Activated CD4-positive, alpha-beta T cell treated with anti-CD3 and anti-CD28 coated beads, Interleukin-2, amount 10 ng/mL, durations not matched to agents 24 days and 14 days (primary cell): ENCODE measurements at regions of chr2 and their contacts with region 1.

Region 1: DNA sequence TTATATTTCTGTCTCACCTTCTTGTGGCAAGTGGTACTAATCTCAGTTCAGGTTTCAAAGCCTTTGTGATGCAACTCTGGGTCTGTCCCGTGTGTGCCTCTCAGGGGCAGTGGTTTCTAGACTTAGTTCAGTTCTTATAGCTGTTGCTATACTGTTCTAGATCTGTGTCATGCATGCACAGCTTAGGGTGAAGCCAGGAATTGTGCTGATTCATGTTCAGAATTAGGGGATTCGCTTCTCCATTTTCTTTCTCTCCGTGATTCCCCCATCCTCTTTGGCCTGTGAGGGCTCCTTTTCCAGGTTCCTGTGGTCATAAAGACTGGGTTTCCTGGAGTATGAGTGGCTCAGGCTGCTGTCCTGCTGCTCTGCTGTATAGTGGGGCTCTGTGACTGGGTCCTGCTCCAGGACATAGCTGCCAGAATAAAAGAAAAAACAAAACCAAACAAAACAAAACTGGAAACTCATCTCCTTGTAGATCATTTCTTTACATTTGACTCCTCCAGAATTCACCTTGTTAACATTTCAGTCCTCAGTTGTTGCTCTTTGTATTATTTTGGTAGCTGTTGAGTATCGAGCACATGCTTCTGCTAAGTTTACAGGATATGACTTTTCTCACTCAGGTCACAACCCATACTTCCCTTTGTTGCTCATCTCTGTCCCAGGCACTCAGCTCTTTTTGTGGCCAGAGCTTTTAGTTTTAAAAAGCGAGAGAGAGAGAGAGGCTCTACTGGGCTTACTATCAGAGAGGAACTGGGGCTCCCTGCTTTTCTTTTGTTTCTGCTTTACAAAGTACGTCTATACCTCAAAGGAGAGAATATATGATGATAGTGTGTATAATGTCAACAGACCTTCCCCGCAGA is 34.2 kb downstream of the CERS6 start:
- DNase-seq: peak; percentile 83
- H3K4me3 Mint-ChIP-seq: peak overlapping the region; percentile 80
- H3K27ac Mint-ChIP-seq: peak overlapping the region; percentile 80
- H3K4me1 Mint-ChIP-seq: peaks cover 40% of the 10 kb centered on the region
- H3K27me3 Mint-ChIP-seq: no peaks in the 10 kb centered on the region

Region 2: DNA sequence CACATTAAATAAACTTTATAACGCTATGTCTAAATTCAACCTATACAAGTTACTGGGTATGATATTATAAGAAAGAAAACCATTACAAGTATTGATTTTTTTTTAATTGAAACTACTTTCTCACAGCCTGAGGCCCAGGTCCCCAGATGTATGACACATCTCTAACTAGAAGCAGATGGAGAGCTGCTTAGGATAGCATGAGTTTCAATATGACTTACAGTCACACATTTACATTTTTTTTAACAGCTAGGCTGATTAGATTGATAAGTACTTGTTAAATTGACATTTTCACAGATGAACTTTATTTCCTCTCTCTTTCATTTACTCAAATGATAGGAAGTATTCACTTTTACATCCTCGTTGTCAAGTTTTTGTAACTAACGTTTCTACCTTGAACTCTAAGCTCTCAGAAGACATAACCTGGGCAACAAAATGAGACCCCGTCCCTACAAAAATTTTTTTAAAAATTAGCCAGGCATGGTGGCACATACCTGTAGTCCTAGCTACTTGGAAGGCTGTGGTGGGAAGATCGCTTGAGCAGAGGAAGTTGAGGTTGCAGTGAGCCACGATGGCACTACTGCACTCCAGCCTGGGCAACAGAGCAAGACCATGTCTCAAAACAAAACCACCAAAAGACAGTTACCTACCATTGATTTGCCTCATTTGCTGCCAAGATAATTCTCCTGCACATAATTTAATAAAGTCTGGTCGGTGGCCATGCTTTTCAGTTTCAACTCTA is 295.3 kb before region 1 on chr2:
- intact Hi-C with region 1: loop called (anchors 1 kb)
- DNase-seq: peak; percentile 75
- H3K4me3 Mint-ChIP-seq: peak overlapping the region; percentile 71
- H3K27ac Mint-ChIP-seq: peak overlapping the region; percentile 92
- H3K4me1 Mint-ChIP-seq: peaks cover 48% of the 10 kb centered on the region
- H3K27me3 Mint-ChIP-seq: no peaks in the 10 kb centered on the region

Region 3: DNA sequence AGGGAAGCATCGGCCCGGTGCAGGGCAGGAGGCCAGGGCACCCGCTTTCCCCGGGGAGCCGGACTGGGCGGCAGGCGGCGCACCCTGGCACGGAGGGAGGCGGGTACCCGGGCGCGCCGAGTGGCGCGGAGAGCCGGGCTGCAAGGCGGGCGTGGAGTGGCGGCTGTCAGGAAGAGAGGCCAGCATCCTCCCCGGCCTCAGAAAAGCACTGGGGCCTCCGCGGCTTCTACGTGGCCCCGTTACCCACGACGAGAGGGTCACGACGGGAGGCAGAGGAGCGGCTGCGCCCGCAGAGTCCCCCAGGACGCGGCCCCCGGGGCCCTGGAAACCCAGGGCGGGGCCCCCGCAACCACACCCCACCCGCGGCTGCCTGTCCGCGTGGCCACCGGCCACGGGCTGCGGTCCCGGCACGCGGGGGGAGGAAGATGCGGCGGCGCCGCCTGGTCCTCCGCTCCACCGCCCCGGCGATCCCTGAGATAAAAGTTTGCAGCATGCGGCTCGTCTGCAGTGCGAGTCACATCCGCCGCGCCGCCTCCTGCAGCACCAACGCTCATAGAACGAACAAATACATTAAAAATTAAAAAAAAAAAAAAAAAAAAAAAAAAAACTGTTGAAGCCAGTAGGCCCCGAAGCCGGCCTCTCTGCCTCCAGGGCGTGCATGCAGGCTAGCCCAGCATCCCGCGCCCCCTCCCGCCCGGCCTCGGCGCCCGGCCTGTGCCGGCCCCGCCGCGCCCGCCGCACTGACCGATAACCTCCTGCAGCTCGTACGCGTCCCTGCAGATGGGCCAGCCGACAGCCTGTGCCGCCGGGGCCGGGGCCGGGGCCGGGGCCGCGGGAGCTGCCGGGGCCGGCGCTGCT is 243.5 kb before region 1 on chr2:
- intact Hi-C with region 1: loop called (anchors 2 kb)
- DNase-seq: peak; percentile 94
- H3K4me3 Mint-ChIP-seq: peak overlapping the region; percentile 88
- H3K27ac Mint-ChIP-seq: peak overlapping the region; percentile 94
- H3K4me1 Mint-ChIP-seq: peaks cover 32% of the 10 kb centered on the region
- H3K27me3 Mint-ChIP-seq: peaks cover 7% of the 10 kb centered on the region

Region 4: DNA sequence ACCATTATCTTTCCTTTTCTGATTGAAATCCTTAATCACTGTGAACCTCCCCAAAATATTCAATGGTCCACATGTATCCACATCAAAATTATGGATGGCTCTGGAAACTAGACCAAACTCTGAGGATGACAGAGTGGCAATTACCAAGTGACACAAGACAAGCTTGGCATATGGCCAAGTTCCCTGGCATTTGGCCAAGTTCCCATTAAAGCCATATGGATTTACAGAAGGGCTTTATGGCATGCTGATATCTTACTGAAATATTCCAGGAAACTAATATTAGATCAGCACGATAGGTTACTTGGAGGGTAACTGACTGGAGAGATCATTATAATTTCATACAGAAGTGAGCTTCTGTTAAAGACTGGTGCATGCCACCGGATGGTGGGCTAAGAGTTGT is 56.1 kb before region 1 on chr2:
- intact Hi-C with region 1: loop called (anchors 1 kb)
- DNase-seq: no peak
- H3K4me3 Mint-ChIP-seq: no peak overlapping the region
- H3K27ac Mint-ChIP-seq: no peak overlapping the region
- H3K4me1 Mint-ChIP-seq: peaks cover 33% of the 10 kb centered on the region
- H3K27me3 Mint-ChIP-seq: no peaks in the 10 kb centered on the region

Region 5: GRCh38 chr2:168536925-168537466 is 46.8 kb after region 1 on chr2:
- intact Hi-C with region 1: loop called (anchors 2 kb)
- DNase-seq: no peak
- H3K4me3 Mint-ChIP-seq: no peak overlapping the region
- H3K27ac Mint-ChIP-seq: no peak overlapping the region
- H3K4me1 Mint-ChIP-seq: peaks cover 40% of the 10 kb centered on the region
- H3K27me3 Mint-ChIP-seq: no peaks in the 10 kb centered on the region